Sigmoid colon (tissue), 7 donors: ENCODE measurements at regions of chr22 and their contacts with region 1.

Region 1: GRCh38 chr22:33909075-33909458 is 11.2 kb downstream of the LARGE1 start:
- DNase-seq: peak; percentile 89
- H3K4me3 ChIP-seq: peak overlapping the region in 2 of 4 donors; percentile 1 to 3
- H3K27ac ChIP-seq: peak overlapping the region; percentile 72 to 93 (median 82)
- H3K4me1 ChIP-seq: peaks cover 0 to 84% (median 44%) of the 10 kb centered on the region in 4 donors
- H3K27me3 ChIP-seq: no peaks in the 10 kb centered on the region
- CTCF ChIP-seq: no peak
- EP300 ChIP-seq: peak in 2 of 4 donors; percentile 5 to 55
- POLR2A ChIP-seq: no peak

Region 2: GRCh38 chr22:33811686-33812085 is 97.4 kb before region 1 on chr22:
- intact Hi-C with region 1: loop called (anchors 5 kb)
- DNase-seq: peak; percentile 95
- H3K4me3 ChIP-seq: no peak overlapping the region
- H3K27ac ChIP-seq: peak overlapping the region; percentile 74 to 85 (median 82)
- H3K4me1 ChIP-seq: peaks cover 0 to 60% (median 47%) of the 10 kb centered on the region in 4 donors
- H3K27me3 ChIP-seq: no peaks in the 10 kb centered on the region
- CTCF ChIP-seq: no peak
- EP300 ChIP-seq: peak in 2 of 4 donors; percentile 73 to 77
- POLR2A ChIP-seq: no peak

Region 3: GRCh38 chr22:33864723-33865130 is 44.3 kb before region 1 on chr22:
- intact Hi-C with region 1: loop called (anchors 5 kb)
- DNase-seq: no peak
- H3K4me3 ChIP-seq: no peak overlapping the region
- H3K27ac ChIP-seq: peak overlapping the region; percentile 22 to 84 (median 62)
- H3K4me1 ChIP-seq: peaks cover 0 to 68% (median 59%) of the 10 kb centered on the region in 4 donors
- H3K27me3 ChIP-seq: no peaks in the 10 kb centered on the region
- CTCF ChIP-seq: no peak
- EP300 ChIP-seq: no peak
- POLR2A ChIP-seq: no peak

Region 4: DNA sequence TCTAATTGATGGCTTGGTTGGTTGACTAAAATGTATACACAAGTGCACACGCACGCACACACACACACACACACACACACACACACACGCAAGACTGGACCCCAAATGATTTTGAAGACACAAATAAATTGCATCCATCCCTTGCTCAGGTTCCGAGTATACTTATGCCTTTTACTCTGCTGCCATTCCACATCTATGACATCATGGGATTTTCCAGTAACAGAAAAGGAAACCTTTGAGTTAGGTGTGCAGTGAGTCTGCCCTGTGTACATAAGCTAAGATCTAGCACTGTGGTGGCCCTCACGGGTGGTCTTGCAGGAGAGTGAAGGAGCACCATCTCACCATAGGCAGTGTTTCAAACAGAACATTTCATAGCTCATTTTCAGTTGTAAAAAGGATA is 31.7 kb after region 1 on chr22:
- intact Hi-C with region 1: no loop called
- DNase-seq: no peak
- H3K4me3 ChIP-seq: no peak overlapping the region
- H3K27ac ChIP-seq: no peak overlapping the region
- H3K4me1 ChIP-seq: peaks cover 0 to 9% (median 0%) of the 10 kb centered on the region in 4 donors
- H3K27me3 ChIP-seq: no peaks in the 10 kb centered on the region
- CTCF ChIP-seq: no peak
- EP300 ChIP-seq: no peak
- POLR2A ChIP-seq: no peak